Posterior vena cava (tissue), 2 donors: ENCODE measurements at regions of chr20 and their contacts with region 1.

Region 1: DNA sequence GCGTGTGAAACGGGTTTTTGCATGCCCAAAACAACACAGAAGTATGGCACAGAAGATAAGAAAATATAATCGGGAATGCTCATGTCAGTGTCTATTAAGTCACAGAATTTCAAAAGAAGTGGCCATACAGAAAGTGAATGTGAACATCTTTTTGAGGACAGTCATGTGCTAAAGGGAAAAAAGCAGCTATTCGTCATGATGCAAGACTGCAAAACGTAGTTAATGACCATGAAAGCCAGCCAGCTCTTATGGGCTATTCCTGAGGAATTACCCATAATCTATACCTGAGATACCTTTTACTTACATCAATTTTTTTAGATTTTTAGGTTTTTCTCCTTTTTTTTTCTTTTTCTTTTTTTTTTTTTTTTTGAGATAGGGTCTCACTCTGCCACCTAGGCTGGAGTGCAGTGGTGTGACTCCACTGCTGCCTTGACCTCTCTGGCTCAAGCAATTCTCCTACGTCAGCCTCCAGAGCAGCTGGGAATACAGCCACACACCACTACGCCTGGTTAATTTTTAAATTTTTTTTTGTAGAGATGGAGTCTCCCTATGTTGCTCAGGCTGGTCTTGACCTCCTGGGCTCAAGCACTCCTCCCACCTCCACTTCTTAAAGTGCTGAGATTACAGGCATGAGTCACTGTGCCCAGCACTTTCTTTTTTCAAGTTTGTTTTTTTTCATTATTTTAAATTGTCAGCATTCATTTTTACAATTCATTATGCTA is 18.1 kb upstream of the ZBP1 start:
- DNase-seq: no peak

Region 2: DNA sequence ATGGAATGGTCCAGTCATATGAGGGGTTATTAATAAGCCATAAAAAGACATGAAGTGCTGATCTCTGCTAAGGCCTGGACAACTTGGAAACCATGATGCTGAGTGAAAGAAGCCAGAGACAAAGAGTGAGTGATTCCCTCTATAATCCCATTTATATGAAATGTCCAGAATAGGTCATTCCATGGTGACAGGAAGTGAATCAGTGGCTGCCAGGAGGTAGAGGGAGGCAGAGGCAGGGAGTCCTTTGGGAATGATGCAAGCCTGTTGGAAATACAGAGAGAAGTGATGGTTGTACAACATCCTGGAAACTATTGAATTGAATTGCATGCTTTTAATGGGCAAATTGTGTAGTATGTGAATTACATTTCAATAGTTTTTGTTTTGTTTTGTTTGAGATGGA is 563.7 kb after region 1 on chr20:
- intact Hi-C with region 1: loop called in 1 of 2 experiments (anchors 5 kb)
- DNase-seq: no peak